Mammary epithelial cell (primary cell): ENCODE measurements at regions of chr6 and their contacts with region 1.

Region 1: GRCh38 chr6:84515067-84515466 is 249.3 kb downstream of the TBX18 start:
- DNase-seq: no peak
- H3K4me3 ChIP-seq: no peak overlapping the region
- H3K27ac ChIP-seq: no peak overlapping the region
- H3K4me1 ChIP-seq: no peaks in the 10 kb centered on the region
- H3K27me3 ChIP-seq: peaks cover 8% of the 10 kb centered on the region
- CTCF ChIP-seq: no peak

Region 2: DNA sequence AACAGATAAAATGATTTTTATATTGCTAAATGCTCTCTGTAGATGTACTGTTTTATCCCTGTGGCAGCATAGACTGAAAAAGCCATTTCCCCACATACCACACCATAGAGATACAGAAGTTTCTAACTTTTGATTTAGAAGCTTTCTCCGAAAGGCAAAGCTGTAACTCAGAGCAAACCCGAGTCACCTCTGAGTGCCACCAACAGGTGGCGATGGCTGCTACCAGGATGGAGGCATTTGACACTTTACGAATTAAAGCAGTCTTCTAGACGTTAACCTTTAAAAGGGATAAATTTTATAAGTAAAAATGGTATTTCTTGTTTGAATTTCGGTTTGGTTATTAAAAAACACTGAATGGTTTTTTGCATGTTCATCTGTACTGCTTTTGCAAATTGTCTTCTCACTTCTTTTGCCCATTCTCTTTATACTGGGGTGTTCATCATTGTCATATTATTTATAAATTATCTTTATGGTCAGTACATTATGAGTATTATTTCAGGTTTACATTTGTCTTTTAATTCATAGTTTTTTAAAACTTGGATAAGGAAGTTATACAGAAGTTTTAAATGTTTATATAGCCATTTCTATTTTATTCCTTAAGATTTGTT is 86.7 kb before region 1 on chr6:
- CTCF ChIA-PET with region 1: no interaction called
- dilution Hi-C with region 1: no loop called
- in situ Hi-C with region 1: no loop called
- intact Hi-C with region 1: no loop called
- DNase-seq: peak; percentile 24
- H3K4me3 ChIP-seq: no peak overlapping the region
- H3K27ac ChIP-seq: no peak overlapping the region
- H3K4me1 ChIP-seq: no peaks in the 10 kb centered on the region
- H3K27me3 ChIP-seq: peaks cover 7% of the 10 kb centered on the region
- CTCF ChIP-seq: peak; percentile 77 to 87

Region 3: DNA sequence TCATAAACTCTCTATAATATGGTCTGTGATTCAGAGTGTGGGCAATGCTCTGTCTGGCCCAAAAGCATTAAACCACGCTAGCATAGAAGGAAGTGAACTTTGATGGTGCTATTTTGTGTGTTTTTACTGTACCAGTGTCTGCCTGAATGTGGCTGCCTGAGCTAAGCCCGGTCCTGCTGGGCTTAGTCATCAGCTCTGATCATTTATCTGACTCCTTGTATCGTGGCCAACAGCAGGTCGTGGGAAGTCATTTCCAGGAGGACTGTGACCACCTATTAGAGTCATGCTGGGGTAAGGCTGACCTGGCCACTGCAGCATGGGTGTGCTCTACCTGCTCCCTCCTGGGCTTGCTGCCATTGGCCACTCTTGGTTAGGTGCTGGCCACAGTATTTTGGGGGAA is 48.6 kb before region 1 on chr6:
- CTCF ChIA-PET with region 1: no interaction called
- dilution Hi-C with region 1: no loop called
- in situ Hi-C with region 1: no loop called
- intact Hi-C with region 1: loop called (anchors 2 kb)
- DNase-seq: peak; percentile 48
- H3K4me3 ChIP-seq: no peak overlapping the region
- H3K27ac ChIP-seq: no peak overlapping the region
- H3K4me1 ChIP-seq: no peaks in the 10 kb centered on the region
- H3K27me3 ChIP-seq: peaks cover 3% of the 10 kb centered on the region
- CTCF ChIP-seq: no peak

Region 4: DNA sequence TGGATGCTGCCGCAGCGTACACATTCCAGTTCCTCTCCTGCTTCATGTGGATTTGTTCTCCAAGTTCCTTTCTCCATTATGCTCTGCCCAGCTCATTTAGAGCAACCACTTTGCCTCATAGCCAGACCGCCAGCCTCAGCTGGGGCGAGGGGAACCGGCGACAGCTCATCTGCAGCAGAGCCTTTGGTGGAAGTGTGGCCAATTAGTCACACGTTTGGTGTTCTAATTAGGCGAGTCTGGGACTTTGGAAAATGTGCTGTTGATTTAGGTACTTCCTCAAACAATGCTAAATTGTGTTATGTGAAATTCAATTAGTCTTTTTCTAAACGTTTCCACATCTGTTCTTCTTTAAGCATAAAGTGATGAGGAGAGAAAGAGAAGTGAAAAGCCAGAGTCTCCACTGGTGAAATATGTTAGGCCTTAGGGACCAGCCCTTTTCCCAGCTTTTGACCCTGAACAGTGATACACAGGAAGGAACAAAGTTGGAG is 31.4 kb after region 1 on chr6:
- CTCF ChIA-PET with region 1: no interaction called
- dilution Hi-C with region 1: no loop called
- in situ Hi-C with region 1: no loop called
- intact Hi-C with region 1: no loop called
- DNase-seq: no peak
- H3K4me3 ChIP-seq: no peak overlapping the region
- H3K27ac ChIP-seq: no peak overlapping the region
- H3K4me1 ChIP-seq: no peaks in the 10 kb centered on the region
- H3K27me3 ChIP-seq: no peaks in the 10 kb centered on the region
- CTCF ChIP-seq: no peak